ENCODE measurements at regions of chr12 and their contacts with region 1.

Region 1: DNA sequence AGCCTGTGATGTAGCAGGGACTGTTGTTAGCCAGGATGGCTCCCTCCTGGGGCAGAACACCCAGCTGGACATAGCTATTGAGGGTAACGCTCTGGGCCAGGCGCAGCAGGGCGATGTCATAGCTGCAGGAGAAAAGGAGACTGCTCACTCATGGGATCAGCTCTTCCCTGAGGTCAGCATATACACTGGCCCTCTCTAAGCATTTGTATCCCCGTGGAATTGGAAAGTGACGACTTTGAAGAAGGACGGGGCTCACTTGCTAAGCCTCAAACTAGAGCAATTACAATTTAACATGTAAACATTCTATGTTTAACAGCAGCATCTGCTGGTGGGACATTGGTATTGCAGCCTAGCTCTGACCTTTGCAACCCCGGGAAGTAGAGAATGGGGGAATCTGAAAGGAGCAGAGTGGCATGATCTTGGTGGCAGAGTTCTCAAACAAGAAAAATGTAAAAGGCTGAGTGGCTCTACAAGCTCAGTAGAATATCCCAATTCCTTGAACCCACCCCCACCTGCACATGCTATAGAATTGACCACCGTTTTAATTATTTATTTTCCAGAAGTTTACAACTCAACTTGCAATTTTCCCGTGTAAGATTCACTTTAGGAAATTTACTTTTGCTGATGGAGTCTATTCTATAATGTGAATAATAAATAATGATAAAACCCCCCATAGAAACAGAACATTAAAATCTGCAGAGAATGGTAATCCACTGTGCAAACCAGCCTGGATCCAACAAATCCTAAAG is 5.0 kb downstream of the CELA1 start:
- DNase-seq: peak; percentile 54
- H3K4me3 Mint-ChIP-seq: no peak overlapping the region
- H3K27ac Mint-ChIP-seq: no peak overlapping the region
- H3K4me1 Mint-ChIP-seq: peaks cover 12% of the 10 kb centered on the region
- H3K27me3 Mint-ChIP-seq: no peaks in the 10 kb centered on the region
- CTCF ChIP-seq: peak; percentile 81

Region 2: DNA sequence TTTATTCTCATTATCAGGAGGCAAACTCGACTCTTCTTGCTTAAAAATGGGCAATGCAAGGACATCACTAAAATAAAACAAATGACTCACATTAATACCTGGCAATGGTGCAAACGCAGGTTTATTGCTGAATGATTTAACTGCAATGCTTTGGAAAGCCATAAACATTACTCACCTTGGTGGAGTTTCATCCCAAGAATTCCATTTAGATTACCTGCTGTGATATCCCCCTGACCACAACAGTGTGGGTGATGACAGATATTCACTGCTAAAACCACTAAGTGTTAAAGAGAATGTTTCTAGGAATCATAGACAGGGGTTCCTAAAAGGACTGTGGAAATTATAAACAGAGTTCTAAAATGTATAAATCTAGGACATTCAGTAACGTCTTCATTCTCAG is 222.7 kb before region 1 on chr12:
- CTCF ChIA-PET with region 1: no interaction called
- intact Hi-C with region 1: no loop called
- DNase-seq: no peak
- H3K4me3 Mint-ChIP-seq: no peak overlapping the region
- H3K27ac Mint-ChIP-seq: no peak overlapping the region
- H3K4me1 Mint-ChIP-seq: no peaks in the 10 kb centered on the region
- H3K27me3 Mint-ChIP-seq: no peaks in the 10 kb centered on the region
- CTCF ChIP-seq: no peak

Region 3: DNA sequence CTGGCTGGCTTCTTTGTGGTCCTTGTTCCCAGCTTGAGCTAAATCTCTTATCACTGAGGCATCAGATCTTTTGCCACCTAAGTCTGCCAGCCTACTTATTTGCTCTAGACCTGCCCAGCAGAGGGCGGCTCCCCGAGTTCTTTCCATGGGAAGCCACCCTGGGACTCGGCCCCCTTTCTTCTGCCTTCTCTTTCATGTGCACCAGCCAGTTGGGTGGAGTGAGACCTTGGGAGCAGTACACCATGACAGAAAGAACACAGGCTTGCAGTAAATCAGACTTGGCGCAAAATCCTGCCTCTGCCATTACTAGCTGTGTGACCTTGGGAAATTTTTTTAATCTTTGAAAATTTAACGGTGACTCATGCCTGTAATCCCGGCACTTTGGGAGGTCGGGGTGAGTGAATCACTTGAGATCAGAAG is 78.7 kb before region 1 on chr12:
- CTCF ChIA-PET with region 1: interaction called, 22 read pairs
- intact Hi-C with region 1: loop called (anchors 1 kb)
- DNase-seq: peak; percentile 63
- H3K4me3 Mint-ChIP-seq: no peak overlapping the region
- H3K27ac Mint-ChIP-seq: no peak overlapping the region
- H3K4me1 Mint-ChIP-seq: peaks cover 14% of the 10 kb centered on the region
- H3K27me3 Mint-ChIP-seq: no peaks in the 10 kb centered on the region
- CTCF ChIP-seq: no peak

Region 4: GRCh38 chr12:51270067-51270970 is 71.1 kb before region 1 on chr12 and contains the start of gene SMAGP:
- CTCF ChIA-PET with region 1: interaction called, 27 read pairs
- intact Hi-C with region 1: loop called (anchors 2 kb)
- DNase-seq: peak; percentile 90
- H3K4me3 Mint-ChIP-seq: peak within 1 kb of the TSS; percentile 83
- H3K27ac Mint-ChIP-seq: peak within 1 kb of the TSS; percentile 95
- H3K4me1 Mint-ChIP-seq: peaks cover 24% of the 10 kb centered on the region
- H3K27me3 Mint-ChIP-seq: no peaks in the 10 kb centered on the region
- CTCF ChIP-seq: no peak
- total RNA-seq, gene SMAGP: 60.9 and 64.1 TPM in 2 replicates

Region 5: GRCh38 chr12:51307655-51308593 is 33.5 kb before region 1 on chr12:
- CTCF ChIA-PET with region 1: interaction called, 10 read pairs
- intact Hi-C with region 1: no loop called
- DNase-seq: peak; percentile 50
- H3K4me3 Mint-ChIP-seq: peak overlapping the region; percentile 44
- H3K27ac Mint-ChIP-seq: peak overlapping the region; percentile 97
- H3K4me1 Mint-ChIP-seq: peaks cover 16% of the 10 kb centered on the region
- H3K27me3 Mint-ChIP-seq: no peaks in the 10 kb centered on the region
- CTCF ChIP-seq: no peak

Measured in Calu3 (cell line).